ENCODE measurements at regions of chr7 and their contacts with region 1.

Region 1: DNA sequence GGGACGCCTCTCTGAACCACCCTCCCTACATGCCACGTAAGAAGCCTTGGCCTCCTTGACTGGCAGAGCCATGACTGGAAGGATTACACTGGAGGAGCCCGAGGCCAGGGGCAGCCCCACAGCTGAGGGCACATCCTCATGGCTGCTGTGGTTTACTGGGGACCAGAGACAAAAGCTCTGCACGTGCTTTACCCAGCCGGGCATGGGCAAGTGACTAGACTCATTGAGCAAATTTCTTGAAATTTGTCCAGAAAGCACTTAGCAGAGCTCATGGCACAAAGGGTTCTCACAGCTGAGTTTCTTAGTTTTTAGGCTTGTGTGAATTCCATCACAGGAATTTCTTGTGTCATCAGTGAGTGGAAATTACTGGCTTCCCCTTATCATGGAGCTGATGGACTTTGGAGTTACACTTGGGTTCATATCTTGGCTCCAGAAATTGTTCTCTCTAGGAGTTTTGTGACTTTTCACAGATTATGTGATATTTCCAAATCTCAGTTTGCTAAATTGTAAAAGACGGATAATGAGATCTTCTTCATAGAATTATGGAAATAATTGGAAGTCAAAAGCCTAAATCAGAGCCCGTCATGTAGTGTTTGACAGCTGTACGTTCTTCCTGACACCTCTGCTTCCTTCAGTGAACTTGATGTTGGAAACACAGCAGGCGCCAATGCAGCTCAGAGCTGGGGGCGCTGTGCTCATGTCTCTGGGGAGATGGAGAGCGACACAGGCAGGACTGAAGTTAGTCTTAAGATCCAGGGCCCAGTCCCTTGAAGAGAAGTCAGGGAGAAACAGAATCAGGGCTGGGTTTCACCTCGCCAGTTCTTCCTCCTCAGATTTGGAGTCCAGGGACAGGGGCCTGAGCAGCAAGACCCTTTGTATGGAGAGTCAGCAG is 47.7 kb upstream of the MGAM2 start:
- DNase-seq: no peak
- H3K4me3 ChIP-seq: no peak overlapping the region
- H3K27ac ChIP-seq: no peak overlapping the region
- H3K4me1 ChIP-seq: no peaks in the 10 kb centered on the region
- H3K27me3 ChIP-seq: no peaks in the 10 kb centered on the region
- CTCF ChIP-seq: no peak

Region 2: DNA sequence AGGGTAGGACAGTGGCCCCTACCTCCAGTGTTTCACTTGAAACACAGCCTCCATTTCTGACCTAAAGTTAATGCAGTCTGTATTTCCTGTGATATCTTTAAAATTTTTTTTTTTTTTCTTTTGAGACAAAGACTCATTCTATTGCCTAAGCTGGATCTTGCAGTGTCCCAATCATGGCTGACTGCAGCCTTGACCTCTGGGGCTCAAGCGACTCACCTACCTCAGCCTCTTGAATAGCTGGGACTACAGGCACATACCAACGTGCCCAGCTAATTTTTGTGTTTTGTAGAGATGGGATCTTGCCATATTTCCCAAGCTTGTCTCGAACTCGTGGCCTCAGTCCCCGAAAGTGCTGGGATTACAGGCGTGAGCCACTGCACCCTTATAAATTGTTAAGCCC is 31.1 kb after region 1 on chr7:
- intact Hi-C with region 1: loop called (anchors 2 kb)
- DNase-seq: no peak
- H3K4me3 ChIP-seq: no peak overlapping the region
- H3K27ac ChIP-seq: no peak overlapping the region
- H3K4me1 ChIP-seq: no peaks in the 10 kb centered on the region
- H3K27me3 ChIP-seq: no peaks in the 10 kb centered on the region
- CTCF ChIP-seq: no peak